Colonic mucosa (tissue), 4 donors: ENCODE measurements at regions of chr11 and their contacts with region 1.

Region 1: DNA sequence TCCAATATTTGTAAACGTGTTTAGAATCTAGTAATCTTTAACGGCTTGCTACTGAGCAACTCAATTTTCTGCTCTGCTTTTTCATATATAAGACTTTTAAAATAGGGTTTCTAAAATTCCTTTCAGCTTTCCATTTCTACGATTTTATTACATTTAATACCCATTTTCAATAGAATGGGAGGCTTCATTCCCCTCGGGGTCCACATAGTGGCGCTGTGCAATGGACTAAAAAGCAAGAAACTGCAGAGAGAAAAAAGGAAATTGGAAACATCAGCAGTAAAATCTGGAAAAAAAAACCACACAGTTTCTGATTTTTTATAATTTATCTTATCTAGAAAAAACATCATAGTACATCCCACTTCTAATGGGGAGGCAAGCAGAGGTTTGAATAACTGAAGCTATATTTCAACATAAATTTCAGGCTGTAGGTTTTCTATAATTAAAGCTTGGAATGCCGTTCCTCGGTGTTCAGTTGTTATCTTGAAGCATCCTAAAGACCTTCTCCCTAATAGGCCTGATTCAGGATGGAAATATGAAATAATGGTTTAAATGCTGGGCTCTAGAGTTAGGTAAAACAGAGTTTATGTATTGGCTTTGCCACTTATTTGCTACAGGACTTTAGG is 18.7 kb upstream of the JHY start:
- DNase-seq: peak; percentile 29
- H3K4me3 ChIP-seq: no peak overlapping the region
- H3K27ac ChIP-seq: no peak overlapping the region
- H3K4me1 ChIP-seq: no peaks in the 10 kb centered on the region
- H3K27me3 ChIP-seq: no peaks in the 10 kb centered on the region
- CTCF ChIP-seq: peak; percentile 77

Region 2: DNA sequence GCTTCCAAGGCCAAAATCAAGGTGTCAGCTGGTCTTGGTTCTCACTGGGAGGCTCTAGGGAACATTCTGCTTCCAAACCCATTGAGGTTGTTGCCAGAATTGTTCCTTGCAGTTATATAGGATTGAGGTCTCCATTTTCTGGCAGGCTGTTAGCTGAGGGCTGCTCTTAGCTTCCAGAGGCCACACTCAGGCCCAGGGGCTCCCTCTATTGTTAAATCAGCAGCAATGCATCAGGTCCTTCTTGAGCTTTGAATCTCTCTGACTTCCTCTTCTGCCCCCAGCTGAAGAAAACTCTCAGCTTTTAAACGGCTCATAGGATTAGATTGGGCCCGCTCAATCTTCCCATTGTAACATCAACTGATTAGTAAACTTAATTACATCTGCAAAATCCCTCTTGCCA is 157.2 kb after region 1 on chr11:
- intact Hi-C with region 1: loop called (anchors 5 kb)
- DNase-seq: no peak
- H3K4me3 ChIP-seq: no peak overlapping the region
- H3K27ac ChIP-seq: no peak overlapping the region
- H3K4me1 ChIP-seq: no peaks in the 10 kb centered on the region
- H3K27me3 ChIP-seq: no peaks in the 10 kb centered on the region
- CTCF ChIP-seq: peak; percentile 28

Region 3: GRCh38 chr11:123547180-123547579 is 683.4 kb after region 1 on chr11:
- intact Hi-C with region 1: no loop called
- DNase-seq: no peak
- H3K4me3 ChIP-seq: no peak overlapping the region
- H3K27ac ChIP-seq: no peak overlapping the region
- H3K4me1 ChIP-seq: no peaks in the 10 kb centered on the region
- H3K27me3 ChIP-seq: no peaks in the 10 kb centered on the region
- CTCF ChIP-seq: no peak